ENCODE measurements at regions of chr16 and their contacts with region 1.

Region 1: DNA sequence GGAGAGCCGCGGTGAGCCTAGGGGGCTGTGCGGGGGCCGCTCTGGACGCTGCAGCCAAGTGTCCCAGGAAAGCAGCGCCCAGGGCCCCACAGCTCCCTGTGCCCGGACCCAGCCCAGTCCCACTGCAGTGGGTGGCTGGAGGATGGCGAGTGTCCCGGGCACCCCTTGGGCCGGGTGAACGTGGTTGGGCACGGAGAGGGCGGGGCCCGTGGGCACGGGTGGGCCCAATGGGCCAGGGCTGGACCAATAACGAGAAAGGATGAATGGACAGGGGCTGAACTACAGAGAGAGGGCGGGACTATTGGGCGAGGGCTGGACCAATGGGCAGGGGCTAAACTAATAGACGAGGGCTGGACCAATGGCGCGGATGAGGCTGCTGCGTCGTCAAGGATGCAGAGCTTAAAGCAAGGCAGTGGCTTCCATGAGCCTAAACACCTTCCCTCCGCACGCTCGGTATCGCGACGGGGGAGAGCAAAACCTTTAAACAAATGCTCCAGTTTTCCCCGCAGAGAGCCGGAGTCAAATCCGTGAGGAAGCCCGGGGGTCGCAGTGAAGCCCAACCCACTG is 472 bp upstream of the FLYWCH2 start:
- DNase-seq: peak; percentile 97 to 98 (median 97)
- H3K4me3 ChIP-seq: peak overlapping the region; percentile 44 to 84 (median 48)
- H3K4me3 Mint-ChIP-seq: peak overlapping the region; percentile 83 to 92
- H3K27ac ChIP-seq: peak overlapping the region; percentile 70 to 89
- H3K27ac Mint-ChIP-seq: peak overlapping the region; percentile 93 to 98 (median 97)
- H3K4me1 ChIP-seq: peaks cover 13 to 22% of the 10 kb centered on the region in 2 donors
- H3K4me1 Mint-ChIP-seq: peaks cover 14% of the 10 kb centered on the region
- H3K27me3 ChIP-seq: no peaks in the 10 kb centered on the region
- H3K27me3 Mint-ChIP-seq: peaks cover 8 to 11% (median 10%) of the 10 kb centered on the region in 3 donors
- CTCF ChIP-seq: no peak

Region 2: GRCh38 chr16:2867987-2868789 is 14.4 kb before region 1 on chr16:
- intact Hi-C with region 1: no loop called
- DNase-seq: peak; percentile 89 to 97 (median 95)
- H3K4me3 ChIP-seq: peak overlapping the region; percentile 39 to 77 (median 64)
- H3K4me3 Mint-ChIP-seq: peak overlapping the region; percentile 89 to 93
- H3K27ac ChIP-seq: peak overlapping the region; percentile 88 to 90
- H3K27ac Mint-ChIP-seq: peak overlapping the region; percentile 95 to 96 (median 96)
- H3K4me1 ChIP-seq: peaks cover 15% of the 10 kb centered on the region in 2 donors
- H3K4me1 Mint-ChIP-seq: peaks cover 11% of the 10 kb centered on the region
- H3K27me3 ChIP-seq: no peaks in the 10 kb centered on the region
- H3K27me3 Mint-ChIP-seq: peaks cover 5 to 8% (median 6%) of the 10 kb centered on the region in 3 donors
- CTCF ChIP-seq: peak; percentile 98

Region 3: GRCh38 chr16:2905431-2906387 is 23.2 kb after region 1 on chr16:
- intact Hi-C with region 1: loop called (anchors 1 to 5 kb)
- DNase-seq: peak; percentile 99 to 100 (median 99)
- H3K4me3 ChIP-seq: peak overlapping the region; percentile 39 to 99 (median 88)
- H3K4me3 Mint-ChIP-seq: peak overlapping the region; percentile 93 to 94
- H3K27ac ChIP-seq: peak overlapping the region; percentile 65 to 76
- H3K27ac Mint-ChIP-seq: peak overlapping the region; percentile 74 to 86 (median 84)
- H3K4me1 ChIP-seq: peaks cover 21 to 27% of the 10 kb centered on the region in 2 donors
- H3K4me1 Mint-ChIP-seq: peaks cover 28% of the 10 kb centered on the region
- H3K27me3 ChIP-seq: no peaks in the 10 kb centered on the region
- H3K27me3 Mint-ChIP-seq: peaks cover 0 to 1% (median 0%) of the 10 kb centered on the region in 3 donors
- CTCF ChIP-seq: no peak